Naive thymus-derived CD4-positive, alpha-beta T cell (primary cell): ENCODE measurements at regions of chr11 and their contacts with region 1.

Region 1: GRCh38 chr11:74398244-74399159 is at the start of gene PGM2L1:
- DNase-seq: peak; percentile 86 to 97 (median 95)
- ATAC-seq: peak; percentile 94
- H3K4me3 ChIP-seq: peak within 1 kb of the TSS; percentile 64
- H3K4me3 Mint-ChIP-seq: peak within 1 kb of the TSS; percentile 95 to 100 (median 99)
- H3K27ac ChIP-seq: peak within 1 kb of the TSS; percentile 75
- H3K27ac Mint-ChIP-seq: peak within 1 kb of the TSS; percentile 93 to 99 (median 98)
- H3K4me1 ChIP-seq: peaks cover 0 to 10% of the 10 kb centered on the region in 2 donors
- H3K4me1 Mint-ChIP-seq: peaks cover 18 to 39% (median 28%) of the 10 kb centered on the region in 7 donors
- H3K27me3 ChIP-seq: no peaks in the 10 kb centered on the region
- H3K27me3 Mint-ChIP-seq: no peaks in the 10 kb centered on the region
- total RNA-seq, gene PGM2L1: 6.5 to 17.7 (median 9.9) TPM

Region 2: DNA sequence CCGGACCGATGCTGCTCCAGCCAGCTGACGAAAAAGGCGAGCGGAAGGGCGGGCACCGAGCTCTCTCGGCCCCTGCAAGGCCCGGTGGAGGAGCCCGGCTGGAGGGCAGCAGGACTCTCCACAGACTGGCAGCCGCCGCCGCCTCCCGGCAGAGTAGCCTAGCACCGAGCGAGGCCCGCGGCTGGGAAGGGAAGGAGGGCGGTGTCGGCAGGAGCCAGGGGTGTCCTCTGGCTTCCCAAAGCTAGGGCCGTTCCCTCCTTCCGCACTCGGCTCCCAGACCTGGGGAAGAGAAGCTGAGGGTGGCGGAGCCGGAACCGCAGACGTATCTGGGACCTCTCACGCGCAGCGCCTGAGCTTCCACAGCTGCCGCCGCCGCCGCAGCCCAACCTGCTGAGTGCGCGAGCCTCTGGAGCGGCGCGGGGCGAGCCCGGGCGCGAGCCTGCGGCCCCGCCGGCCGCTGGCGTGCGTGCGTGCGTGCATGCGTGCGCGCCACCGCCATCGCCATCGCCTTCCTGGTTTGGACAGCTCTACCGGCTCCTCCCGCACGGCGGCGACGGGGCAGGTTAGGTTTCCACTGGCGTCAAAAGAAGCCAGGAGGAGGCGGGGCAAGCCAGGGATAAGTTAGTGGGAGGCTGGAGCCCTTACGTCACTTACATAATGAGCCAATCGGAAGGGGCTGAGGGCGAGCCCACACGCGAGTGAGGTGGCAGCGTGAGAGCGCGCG is 637.7 kb before region 1 on chr11 and contains the start of gene RAB6A:
- CTCF ChIA-PET with region 1: no interaction called
- POLR2A ChIA-PET with region 1: no interaction called
- intact Hi-C with region 1: loop called in 1 of 2 experiments (anchors 1 kb)
- DNase-seq: peak; percentile 94 to 100 (median 100)
- ATAC-seq: peak; percentile 94
- H3K4me3 ChIP-seq: peak within 1 kb of the TSS; percentile 87
- H3K4me3 Mint-ChIP-seq: peak within 1 kb of the TSS; percentile 89 to 98 (median 94)
- H3K27ac ChIP-seq: peak within 1 kb of the TSS; percentile 89
- H3K27ac Mint-ChIP-seq: peak within 1 kb of the TSS; percentile 86 to 98 (median 92)
- H3K4me1 ChIP-seq: peaks cover 14 to 15% of the 10 kb centered on the region in 2 donors
- H3K4me1 Mint-ChIP-seq: peaks cover 19 to 40% (median 32%) of the 10 kb centered on the region in 7 donors
- H3K27me3 ChIP-seq: no peaks in the 10 kb centered on the region
- H3K27me3 Mint-ChIP-seq: peaks cover 0 to 5% (median 0%) of the 10 kb centered on the region in 5 donors
- total RNA-seq, gene RAB6A: 54.9 to 94.5 (median 80.0) TPM

Region 3: DNA sequence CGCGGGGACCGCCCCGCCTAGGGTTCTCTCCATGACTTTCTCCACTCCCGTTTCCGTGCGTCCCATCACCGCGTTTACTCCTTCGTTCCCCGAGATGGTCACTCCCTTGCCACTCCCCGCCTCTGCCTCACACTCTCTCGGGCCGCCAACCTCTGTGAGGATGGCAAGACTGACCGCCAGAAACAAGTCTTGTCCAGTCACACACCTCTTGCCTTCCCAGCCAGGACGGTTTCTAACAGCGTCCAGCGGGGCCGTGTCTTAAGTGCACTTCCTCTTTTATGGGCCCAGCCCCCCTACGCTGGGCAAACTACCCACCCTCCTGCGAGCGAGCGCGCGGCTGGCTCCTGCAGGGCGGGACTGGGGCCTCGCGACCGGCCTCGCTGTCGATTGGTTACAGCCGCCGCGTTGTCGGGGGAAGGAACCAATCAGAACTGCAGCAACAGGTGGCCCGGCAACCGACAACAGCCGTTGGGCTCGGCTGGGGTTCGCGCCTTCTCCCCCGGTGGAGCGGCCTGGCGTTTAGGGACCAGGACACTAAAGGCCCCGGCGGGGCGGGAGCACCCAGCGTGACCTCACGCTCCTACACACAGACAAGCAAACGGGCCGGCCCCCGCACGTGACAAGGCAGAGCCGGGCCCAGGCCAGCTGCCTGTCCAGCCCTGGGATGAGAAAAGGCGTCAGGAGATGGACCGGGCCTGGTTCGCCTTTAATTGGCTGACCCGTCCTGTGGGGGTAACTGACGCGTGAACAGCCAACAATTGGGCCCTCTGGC is 415.3 kb before region 1 on chr11:
- CTCF ChIA-PET with region 1: no interaction called
- POLR2A ChIA-PET with region 1: no interaction called
- intact Hi-C with region 1: loop called in 1 of 2 experiments (anchors 1 kb)
- DNase-seq: peak; percentile 83 to 94 (median 92)
- ATAC-seq: peak; percentile 86
- H3K4me3 ChIP-seq: peak overlapping the region; percentile 93
- H3K4me3 Mint-ChIP-seq: peak overlapping the region; percentile 93 to 100 (median 99)
- H3K27ac ChIP-seq: peak overlapping the region; percentile 96
- H3K27ac Mint-ChIP-seq: peak overlapping the region; percentile 98 to 100 (median 99)
- H3K4me1 ChIP-seq: peaks cover 26 to 31% of the 10 kb centered on the region in 2 donors
- H3K4me1 Mint-ChIP-seq: peaks cover 29 to 55% (median 44%) of the 10 kb centered on the region in 7 donors
- H3K27me3 ChIP-seq: no peaks in the 10 kb centered on the region
- H3K27me3 Mint-ChIP-seq: no peaks in the 10 kb centered on the region

Region 4: GRCh38 chr11:74592441-74593362 is 194.2 kb after region 1 on chr11 and contains the start of gene POLD3:
- CTCF ChIA-PET with region 1: no interaction called
- POLR2A ChIA-PET with region 1: no interaction called
- intact Hi-C with region 1: loop called (anchors 1 kb)
- DNase-seq: peak; percentile 83 to 97 (median 94)
- ATAC-seq: peak; percentile 99
- H3K4me3 ChIP-seq: peak within 1 kb of the TSS; percentile 98
- H3K4me3 Mint-ChIP-seq: peak within 1 kb of the TSS; percentile 90 to 100 (median 92)
- H3K27ac ChIP-seq: peak within 1 kb of the TSS; percentile 96
- H3K27ac Mint-ChIP-seq: peak within 1 kb of the TSS; percentile 90 to 99 (median 95)
- H3K4me1 ChIP-seq: peaks cover 9% of the 10 kb centered on the region in 2 donors
- H3K4me1 Mint-ChIP-seq: peaks cover 7 to 33% (median 27%) of the 10 kb centered on the region in 7 donors
- H3K27me3 ChIP-seq: no peaks in the 10 kb centered on the region
- H3K27me3 Mint-ChIP-seq: peaks cover 0 to 5% (median 0%) of the 10 kb centered on the region in 5 donors
- total RNA-seq, gene POLD3: 8.0 to 40.8 (median 14.7) TPM

Region 5: DNA sequence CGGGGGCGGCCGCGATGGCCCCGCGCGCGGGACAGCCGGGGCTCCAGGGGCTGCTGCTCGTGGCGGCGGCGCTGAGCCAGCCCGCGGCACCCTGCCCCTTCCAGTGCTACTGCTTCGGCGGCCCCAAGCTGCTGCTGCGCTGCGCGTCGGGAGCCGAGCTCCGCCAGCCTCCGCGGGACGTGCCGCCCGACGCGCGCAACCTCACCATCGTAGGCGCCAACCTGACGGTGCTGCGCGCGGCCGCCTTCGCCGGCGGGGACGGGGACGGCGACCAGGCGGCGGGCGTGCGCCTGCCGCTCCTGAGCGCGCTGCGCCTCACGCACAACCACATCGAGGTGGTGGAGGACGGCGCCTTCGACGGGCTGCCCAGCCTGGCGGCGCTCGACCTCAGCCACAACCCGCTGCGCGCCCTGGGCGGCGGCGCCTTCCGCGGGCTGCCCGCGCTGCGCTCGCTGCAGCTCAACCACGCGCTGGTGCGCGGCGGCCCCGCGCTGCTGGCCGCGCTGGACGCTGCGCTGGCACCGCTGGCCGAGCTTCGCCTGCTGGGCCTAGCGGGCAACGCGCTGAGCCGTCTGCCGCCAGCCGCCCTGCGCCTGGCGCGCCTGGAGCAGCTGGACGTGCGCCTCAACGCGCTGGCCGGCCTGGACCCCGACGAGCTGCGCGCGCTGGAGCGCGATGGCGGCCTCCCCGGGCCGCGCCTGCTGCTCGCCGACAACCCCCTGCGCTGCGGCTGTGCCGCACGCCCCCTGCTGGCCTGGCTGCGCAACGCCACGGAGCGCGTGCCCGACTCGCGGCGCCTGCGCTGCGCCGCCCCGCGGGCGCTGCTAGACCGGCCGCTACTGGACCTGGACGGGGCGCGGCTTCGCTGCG is 842.8 kb after region 1 on chr11:
- CTCF ChIA-PET with region 1: no interaction called
- POLR2A ChIA-PET with region 1: no interaction called
- intact Hi-C with region 1: loop called in 1 of 2 experiments (anchors 10 kb)
- DNase-seq: peak; percentile 71 to 95 (median 86)
- ATAC-seq: peak; percentile 98
- H3K4me3 ChIP-seq: peak overlapping the region; percentile 54
- H3K4me3 Mint-ChIP-seq: peak overlapping the region; percentile 59 to 85 (median 75)
- H3K27ac ChIP-seq: no peak overlapping the region
- H3K27ac Mint-ChIP-seq: no peak overlapping the region
- H3K4me1 ChIP-seq: peaks cover 5 to 15% of the 10 kb centered on the region in 2 donors
- H3K4me1 Mint-ChIP-seq: peaks cover 0 to 14% (median 10%) of the 10 kb centered on the region in 7 donors
- H3K27me3 ChIP-seq: peaks cover 3 to 5% of the 10 kb centered on the region in 2 donors
- H3K27me3 Mint-ChIP-seq: peaks cover 13 to 68% (median 27%) of the 10 kb centered on the region in 5 donors